ENCODE measurements at regions of chr17 and their contacts with region 1.

Region 1: DNA sequence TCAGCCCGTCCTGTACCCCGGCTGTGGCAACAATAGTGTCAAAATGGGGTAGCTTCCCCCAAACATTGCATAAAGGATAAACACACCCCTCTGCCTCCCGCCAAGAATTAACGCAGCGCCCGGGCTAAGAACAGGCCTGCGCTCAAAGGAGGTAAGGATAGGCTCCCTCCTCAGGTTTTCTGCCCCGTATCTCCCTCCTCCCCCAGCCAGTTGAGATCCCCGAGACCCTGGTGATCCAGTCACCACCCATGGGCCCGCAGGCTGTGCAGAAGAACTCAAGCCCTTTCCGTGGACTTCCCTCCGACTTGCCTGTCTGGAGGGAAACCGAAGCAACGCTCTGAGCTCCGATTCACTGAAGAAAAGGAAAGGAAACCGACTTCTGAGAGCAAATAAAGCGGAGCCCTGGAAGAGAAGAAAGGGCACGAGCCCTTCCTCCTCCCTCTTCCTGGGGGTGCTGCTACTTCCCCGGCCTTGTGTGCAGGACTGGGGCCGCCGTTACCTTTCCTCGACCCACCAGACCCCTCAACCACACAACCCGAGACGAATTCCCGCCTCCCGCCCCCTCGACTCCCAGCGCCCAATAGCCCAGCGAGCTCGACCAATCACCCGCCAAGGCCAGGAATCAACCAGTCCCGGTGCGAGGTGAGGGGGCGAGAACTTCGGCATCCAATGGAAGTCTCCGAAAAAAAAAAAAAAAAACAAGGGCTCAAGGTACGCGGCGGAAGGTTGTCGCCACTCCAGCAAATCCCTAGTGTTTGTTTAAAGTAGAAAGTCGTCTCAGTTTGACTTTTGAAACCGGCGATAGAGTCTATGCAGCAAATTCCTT is at the start of gene BRIP1:
- DNase-seq: peak; percentile 96 to 97 (median 96)
- ATAC-seq: peak; percentile 99
- H3K4me3 ChIP-seq: peak within 1 kb of the TSS; percentile 64
- H3K27ac ChIP-seq: peak within 1 kb of the TSS; percentile 92
- H3K4me1 ChIP-seq: peaks cover 0 to 7% of the 10 kb centered on the region in 2 experiments; a peak in 2 of 5 replicates
- H3K27me3 ChIP-seq: no peaks in the 10 kb centered on the region
- CTCF ChIP-seq: no peak
- EP300 ChIP-seq: no peak
- POLR2A ChIP-seq: peak; percentile 95
- RAD21 ChIP-seq: no peak
- polyA plus RNA-seq, gene BRIP1: 2.4 to 3.6 TPM

Region 2: GRCh38 chr17:61849674-61850073 is 13.5 kb before region 1 on chr17:
- CTCF ChIA-PET with region 1: interaction called, 3 read pairs
- POLR2A ChIA-PET with region 1: interaction called, 10 read pairs
- in situ Hi-C with region 1: no loop called
- intact Hi-C with region 1: no loop called
- DNase-seq: no peak
- ATAC-seq: no peak
- H3K4me3 ChIP-seq: no peak overlapping the region
- H3K27ac ChIP-seq: no peak overlapping the region
- H3K4me1 ChIP-seq: no peaks in the 10 kb centered on the region
- H3K27me3 ChIP-seq: no peaks in the 10 kb centered on the region
- CTCF ChIP-seq: no peak
- EP300 ChIP-seq: no peak
- POLR2A ChIP-seq: no peak
- RAD21 ChIP-seq: no peak

Region 3: GRCh38 chr17:61875285-61875684 is 12.1 kb after region 1 on chr17:
- CTCF ChIA-PET with region 1: no interaction called
- POLR2A ChIA-PET with region 1: interaction called, 14 read pairs
- in situ Hi-C with region 1: no loop called
- intact Hi-C with region 1: no loop called
- DNase-seq: no peak
- ATAC-seq: no peak
- H3K4me3 ChIP-seq: no peak overlapping the region
- H3K27ac ChIP-seq: no peak overlapping the region
- H3K4me1 ChIP-seq: no peaks in the 10 kb centered on the region
- H3K27me3 ChIP-seq: no peaks in the 10 kb centered on the region
- CTCF ChIP-seq: no peak
- EP300 ChIP-seq: no peak
- POLR2A ChIP-seq: no peak
- RAD21 ChIP-seq: no peak

Region 4: DNA sequence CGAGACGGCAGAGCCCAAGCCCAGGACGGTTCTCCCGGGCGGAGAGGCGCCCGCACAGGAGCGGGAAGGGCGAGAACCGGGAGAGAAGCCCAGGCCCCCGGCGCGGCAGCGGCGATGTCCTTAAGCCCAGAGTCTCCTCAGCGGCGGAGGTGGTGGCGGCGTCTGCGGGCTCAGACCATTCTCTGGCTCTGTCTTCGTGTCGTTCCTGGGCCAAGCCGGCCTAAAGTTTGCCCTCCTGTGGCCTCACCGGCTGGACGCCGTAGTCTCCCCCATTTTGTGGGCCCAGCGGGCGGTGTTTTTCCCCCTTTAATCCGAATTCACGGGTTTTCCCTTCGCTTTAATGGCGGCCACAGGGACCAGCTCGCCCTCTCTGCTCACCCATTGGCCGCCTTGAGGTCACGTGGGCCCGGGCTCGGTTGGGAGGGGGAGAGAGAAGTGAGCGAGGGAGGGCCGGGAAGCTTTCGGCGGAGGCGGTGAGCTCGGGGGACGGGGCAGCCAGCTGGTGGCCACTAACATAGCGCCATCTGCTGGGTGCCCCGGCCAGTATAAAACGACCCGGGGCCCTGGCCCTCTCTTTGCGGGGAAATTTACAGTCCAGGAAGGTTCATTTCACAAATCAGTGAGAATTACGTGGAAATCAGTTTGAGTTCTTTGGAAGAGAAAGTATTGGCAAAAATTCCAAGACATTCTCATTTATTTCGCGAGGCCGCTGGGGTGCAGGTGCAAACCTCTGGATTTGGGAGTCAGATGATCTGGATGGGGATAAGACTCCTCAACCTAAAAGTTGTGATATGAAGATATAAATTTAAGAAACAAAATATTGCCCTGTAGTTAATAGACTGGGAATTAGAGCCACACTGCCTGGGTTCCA is 202.6 kb after region 1 on chr17:
- CTCF ChIA-PET with region 1: no interaction called
- POLR2A ChIA-PET with region 1: interaction called, 4 read pairs
- in situ Hi-C with region 1: no loop called
- intact Hi-C with region 1: loop called (anchors 1 kb)
- DNase-seq: peak; percentile 98 to 99 (median 98)
- ATAC-seq: peak; percentile 96
- H3K4me3 ChIP-seq: peak overlapping the region; percentile 86
- H3K27ac ChIP-seq: peak overlapping the region; percentile 99
- H3K4me1 ChIP-seq: peaks cover 4 to 10% of the 10 kb centered on the region in 2 experiments; a peak in 3 of 5 replicates
- H3K27me3 ChIP-seq: no peaks in the 10 kb centered on the region
- CTCF ChIP-seq: peak; percentile 85 to 94 (median 91)
- EP300 ChIP-seq: no peak; the same call in 1 of the 2 replicates
- POLR2A ChIP-seq: peak; percentile 95
- RAD21 ChIP-seq: peak; percentile 55 to 67